Activated CD8-positive, alpha-beta memory T cell treated with anti-CD3 and anti-CD28 coated beads, Interleukin-2, amount 10 ng/mL, durations not matched to agents 7 days and 5 days (primary cell): ENCODE measurements at regions of chr14 and their contacts with region 1.

Region 1: DNA sequence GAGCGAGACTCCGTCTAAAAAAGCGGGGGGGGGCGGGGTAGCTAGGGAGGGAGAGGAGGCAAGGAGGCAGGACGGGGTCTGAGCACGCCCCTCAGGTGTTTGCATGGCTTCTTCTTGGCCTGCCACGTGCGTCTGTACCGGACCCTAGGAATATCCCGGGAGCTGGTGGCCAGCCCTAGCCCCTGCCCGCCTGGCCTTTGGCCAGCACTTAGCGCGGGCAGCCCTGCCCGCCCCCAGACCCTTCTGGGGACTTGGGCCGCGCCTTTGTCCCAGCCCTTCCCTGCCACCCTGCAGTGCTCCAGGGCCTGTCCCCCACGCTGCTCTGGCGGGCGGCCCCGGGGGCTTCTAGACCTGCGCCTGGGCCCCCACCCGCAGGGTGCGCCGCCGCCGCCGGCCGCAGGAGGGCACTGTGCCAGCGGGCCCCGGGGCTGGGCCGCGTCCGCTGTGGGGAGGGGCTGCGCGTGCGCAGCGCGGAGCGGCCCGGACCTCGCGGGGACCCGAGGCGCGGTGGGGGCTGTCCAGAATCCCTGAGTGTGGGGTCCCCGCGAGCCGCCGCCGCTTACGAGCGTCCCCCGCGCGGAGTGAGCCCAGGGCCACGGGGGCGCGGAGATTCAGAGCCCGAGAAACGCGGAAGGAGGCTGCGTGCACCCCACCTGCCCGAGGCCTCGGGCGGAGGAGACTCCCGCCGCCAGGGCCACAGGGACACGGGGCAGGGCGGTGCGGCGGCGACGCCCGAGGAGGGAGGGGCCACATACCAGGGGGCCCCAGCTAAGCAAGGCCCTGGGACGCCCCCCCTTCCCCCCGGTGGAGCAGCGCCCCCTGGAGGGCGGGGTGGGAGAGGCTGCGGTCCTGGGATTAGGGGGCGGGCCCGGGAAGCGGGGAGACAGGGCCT is 21.0 kb downstream of the SLC25A29 start:
- DNase-seq: peak; percentile 83
- ATAC-seq: peak; percentile 93
- H3K4me3 Mint-ChIP-seq: peak overlapping the region; percentile 67
- H3K27ac Mint-ChIP-seq: peak overlapping the region; percentile 61
- H3K4me1 Mint-ChIP-seq: peaks cover 19% of the 10 kb centered on the region
- H3K27me3 Mint-ChIP-seq: no peaks in the 10 kb centered on the region

Region 2: DNA sequence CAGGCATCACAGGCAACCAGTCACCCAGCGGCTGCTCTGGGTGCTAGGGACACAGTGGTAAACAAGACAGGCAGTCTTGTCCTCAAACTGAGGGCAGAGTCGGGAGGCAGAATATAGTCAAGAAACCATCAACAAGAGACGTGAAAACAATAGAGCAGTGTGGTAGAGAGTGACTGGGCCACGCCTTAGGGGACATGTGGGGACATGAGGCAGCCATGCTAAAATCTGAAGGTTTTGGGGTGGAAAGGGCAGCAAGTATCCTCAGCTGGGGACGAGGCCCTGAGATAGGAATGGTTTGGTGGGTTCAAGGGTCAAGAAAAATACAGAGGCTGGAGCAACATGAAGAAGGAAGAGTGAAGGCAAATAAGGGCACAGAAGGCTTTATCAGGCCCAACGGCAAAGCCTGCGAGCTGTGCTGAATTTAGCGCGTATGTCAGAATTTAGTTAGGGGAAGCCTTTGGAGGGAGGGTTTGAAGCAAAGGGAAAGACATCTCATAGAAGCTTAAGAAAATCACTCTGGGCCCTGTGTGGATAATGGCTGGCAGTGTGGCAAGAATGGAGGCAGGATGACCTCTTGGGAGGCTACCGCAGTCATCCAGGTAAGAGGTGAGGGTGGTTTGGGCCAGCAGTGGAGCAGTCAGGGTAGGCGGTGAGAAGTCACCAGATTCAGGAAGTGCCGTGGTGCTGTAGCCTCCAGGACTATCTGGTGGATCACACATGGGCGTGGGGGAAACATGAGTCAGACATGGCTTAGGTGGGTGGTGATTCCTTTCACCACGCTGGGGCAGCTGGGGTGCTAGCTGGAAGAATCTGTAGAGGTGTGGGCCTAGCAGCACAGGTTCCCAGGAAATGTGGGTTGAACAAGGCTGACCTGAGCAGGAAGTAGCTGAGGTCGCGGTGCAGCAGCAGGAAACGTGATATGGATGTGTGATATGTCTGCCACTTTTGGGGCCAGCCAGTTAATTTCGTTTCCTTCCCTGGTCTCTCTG is 217.0 kb before region 1 on chr14:
- CTCF ChIA-PET with region 1: no interaction called
- DNase-seq: peak; percentile 96
- ATAC-seq: peak; percentile 54
- H3K4me3 Mint-ChIP-seq: peak overlapping the region; percentile 97
- H3K27ac Mint-ChIP-seq: peak overlapping the region; percentile 99
- H3K4me1 Mint-ChIP-seq: peaks cover 54% of the 10 kb centered on the region
- H3K27me3 Mint-ChIP-seq: no peaks in the 10 kb centered on the region

Region 3: DNA sequence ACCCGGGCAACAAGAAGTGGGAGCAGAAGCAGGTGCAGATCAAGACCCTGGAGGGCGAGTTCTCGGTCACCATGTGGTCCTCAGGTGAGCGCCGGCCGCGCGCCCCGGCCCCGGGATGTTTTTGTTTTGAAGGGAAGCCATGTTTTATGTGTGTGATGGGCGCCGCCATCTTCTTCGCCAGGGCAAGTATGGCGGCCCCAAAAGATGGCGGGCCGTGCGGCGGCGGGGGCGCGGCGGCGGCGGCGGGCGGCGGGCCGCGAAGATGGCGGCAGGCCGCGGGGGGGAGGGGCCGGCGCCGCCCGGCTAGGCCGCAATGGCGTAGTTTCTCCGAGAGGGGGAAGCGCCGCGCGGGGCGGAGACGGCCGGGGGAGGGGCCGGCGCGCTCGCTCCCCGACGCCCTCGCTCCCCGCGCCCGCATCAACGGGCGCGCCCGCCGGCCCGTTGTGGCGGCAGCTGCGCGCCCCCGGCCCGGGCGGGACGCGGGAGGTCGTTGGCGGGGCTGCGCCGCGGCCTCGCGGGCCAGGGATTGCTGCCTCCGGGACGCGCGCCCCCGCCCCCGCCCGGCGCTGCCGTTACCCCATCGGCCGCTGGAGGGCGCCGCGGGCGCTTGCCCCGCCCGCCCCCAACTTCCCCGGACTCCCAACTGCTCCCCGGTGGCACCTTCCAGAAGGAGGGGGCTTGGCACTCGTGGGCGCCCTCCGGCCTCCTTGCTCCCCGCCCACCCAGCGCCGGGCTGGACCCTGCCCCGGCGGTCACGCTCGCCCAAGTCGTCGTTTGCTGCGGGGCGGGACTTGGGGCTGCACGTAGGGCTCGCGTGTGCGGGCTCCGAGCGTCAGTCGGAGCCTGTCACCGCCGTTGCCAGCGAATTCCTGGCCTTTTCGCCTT is 45.2 kb before region 1 on chr14:
- CTCF ChIA-PET with region 1: interaction called, 52 read pairs
- DNase-seq: peak; percentile 87
- ATAC-seq: peak; percentile 42
- H3K4me3 Mint-ChIP-seq: peak overlapping the region; percentile 97
- H3K27ac Mint-ChIP-seq: peak overlapping the region; percentile 89
- H3K4me1 Mint-ChIP-seq: peaks cover 46% of the 10 kb centered on the region
- H3K27me3 Mint-ChIP-seq: no peaks in the 10 kb centered on the region

Region 4: DNA sequence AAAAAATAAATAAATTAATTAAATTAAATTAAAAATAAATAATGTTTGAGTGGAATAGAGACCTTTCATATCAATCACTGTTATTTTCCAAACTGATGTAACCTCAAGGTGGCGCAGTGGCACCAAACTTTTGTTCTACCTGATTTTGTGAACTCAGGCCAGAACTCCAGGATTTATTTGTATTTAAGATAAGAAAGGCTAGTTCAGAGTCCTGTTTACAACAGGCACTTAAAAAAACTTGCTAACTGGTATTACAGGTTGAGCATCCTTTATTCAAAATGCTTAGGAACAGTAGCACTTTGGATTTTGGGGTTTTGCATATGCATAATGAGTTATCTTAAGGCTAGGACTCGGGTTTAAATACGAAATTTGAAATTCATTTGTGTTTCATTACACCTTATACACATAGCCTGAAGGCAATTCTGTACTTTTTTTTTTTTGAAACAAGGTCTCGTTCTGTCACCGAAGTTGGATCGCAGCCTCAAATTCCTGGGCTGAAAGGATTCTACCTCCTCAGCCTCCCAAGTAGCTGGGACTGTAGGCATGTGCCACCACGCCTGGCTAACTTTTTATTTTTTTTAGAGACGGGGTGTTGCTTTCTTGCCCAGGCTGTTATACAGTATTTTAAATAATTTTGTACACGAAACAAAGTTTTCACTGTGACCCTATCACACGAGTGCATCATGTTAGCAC is 13.9 kb before region 1 on chr14:
- CTCF ChIA-PET with region 1: interaction called, 35 read pairs
- DNase-seq: no peak
- ATAC-seq: no peak
- H3K4me3 Mint-ChIP-seq: no peak overlapping the region
- H3K27ac Mint-ChIP-seq: no peak overlapping the region
- H3K4me1 Mint-ChIP-seq: peaks cover 32% of the 10 kb centered on the region
- H3K27me3 Mint-ChIP-seq: no peaks in the 10 kb centered on the region

Region 5: GRCh38 chr14:100306420-100307219 is 21.4 kb after region 1 on chr14 and contains the start of gene SLC25A29:
- CTCF ChIA-PET with region 1: interaction called, 12 read pairs
- DNase-seq: peak; percentile 83
- ATAC-seq: peak; percentile 94
- H3K4me3 Mint-ChIP-seq: peak within 1 kb of the TSS; percentile 69
- H3K27ac Mint-ChIP-seq: no peak within 1 kb of the TSS
- H3K4me1 Mint-ChIP-seq: peaks cover 16% of the 10 kb centered on the region
- H3K27me3 Mint-ChIP-seq: peaks cover 22% of the 10 kb centered on the region
- total RNA-seq, gene SLC25A29: 15.9 to 21.6 TPM

Region 6: DNA sequence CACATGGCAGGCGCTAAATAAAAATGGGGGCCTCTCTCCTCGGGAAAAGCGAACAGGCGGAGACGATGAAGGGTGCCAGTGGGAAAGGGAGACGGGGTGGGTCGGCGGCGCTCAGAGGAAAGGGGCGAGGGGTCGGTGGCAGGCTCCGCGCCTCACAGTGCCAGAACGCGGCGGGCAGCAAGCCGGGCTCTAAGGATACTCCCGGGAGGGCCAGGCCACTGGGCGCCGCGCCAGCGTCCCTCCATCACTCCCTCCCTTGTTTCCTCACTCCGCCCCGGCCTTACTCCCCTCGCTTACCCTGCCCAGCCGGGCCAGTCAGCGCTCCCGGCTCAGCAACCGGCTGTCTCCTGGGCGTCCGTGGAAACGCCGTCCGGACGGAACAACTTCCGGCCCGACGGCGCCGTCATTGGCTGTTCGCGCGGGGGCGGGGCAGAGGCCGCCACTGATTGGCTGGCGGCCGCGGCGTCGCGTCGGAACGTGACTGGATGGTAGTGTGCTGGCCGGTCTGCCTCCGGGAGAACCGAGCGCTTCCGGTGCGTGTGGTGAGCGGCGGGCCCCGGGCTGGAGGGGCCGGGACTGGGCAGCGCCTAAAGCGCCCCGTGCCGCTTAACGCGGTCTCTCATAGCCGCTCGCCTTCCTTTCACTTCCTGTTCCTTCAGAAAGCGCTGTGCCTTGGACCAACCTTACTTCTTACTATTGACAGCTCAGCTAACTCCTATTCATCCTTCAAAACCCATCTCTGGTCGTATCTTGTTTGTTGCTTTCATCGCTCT is 90.9 kb after region 1 on chr14:
- CTCF ChIA-PET with region 1: interaction called, 16 read pairs
- DNase-seq: peak; percentile 95
- ATAC-seq: peak; percentile 84
- H3K4me3 Mint-ChIP-seq: peak within 1 kb of the TSS; percentile 85
- H3K27ac Mint-ChIP-seq: peak within 1 kb of the TSS; percentile 92
- H3K4me1 Mint-ChIP-seq: peaks cover 49% of the 10 kb centered on the region
- H3K27me3 Mint-ChIP-seq: no peaks in the 10 kb centered on the region